ENCODE measurements at regions of chr7 and their contacts with region 1.

Region 1: GRCh38 chr7:128409596-128410160 is at the start of gene IMPDH1:
- DNase-seq: peak; percentile 90 to 97 (median 97)
- ATAC-seq: peak; percentile 94
- H3K4me3 ChIP-seq: peak within 1 kb of the TSS; percentile 68
- H3K27ac ChIP-seq: peak within 1 kb of the TSS; percentile 84
- H3K4me1 ChIP-seq: peaks cover 7% of the 10 kb centered on the region
- H3K27me3 ChIP-seq: no peaks in the 10 kb centered on the region
- total RNA-seq, gene IMPDH1: 13.9 to 22.2 (median 16.2) TPM

Region 2: GRCh38 chr7:127850195-127850594 is 559.5 kb before region 1 on chr7:
- intact Hi-C with region 1: no loop called
- DNase-seq: no peak
- ATAC-seq: no peak
- H3K4me3 ChIP-seq: no peak overlapping the region
- H3K27ac ChIP-seq: no peak overlapping the region
- H3K4me1 ChIP-seq: peaks cover 4% of the 10 kb centered on the region
- H3K27me3 ChIP-seq: no peaks in the 10 kb centered on the region

Region 3: GRCh38 chr7:128462460-128462859 is 52.8 kb after region 1 on chr7:
- intact Hi-C with region 1: loop called in 1 of 4 experiments (anchors 10 kb)
- DNase-seq: no peak
- ATAC-seq: no peak
- H3K4me3 ChIP-seq: no peak overlapping the region
- H3K27ac ChIP-seq: no peak overlapping the region
- H3K4me1 ChIP-seq: no peaks in the 10 kb centered on the region
- H3K27me3 ChIP-seq: no peaks in the 10 kb centered on the region